PC-9 (cell line): ENCODE measurements at regions of chr13 and their contacts with region 1.

Region 1: GRCh38 chr13:41411522-41411921 is 45.8 kb upstream of the RGCC start:
- DNase-seq: peak in 1 of 2 experiments; percentile 25
- H3K4me3 ChIP-seq: no peak overlapping the region
- H3K27ac ChIP-seq: no peak overlapping the region
- H3K4me1 ChIP-seq: no peaks in the 10 kb centered on the region
- H3K27me3 ChIP-seq: no peaks in the 10 kb centered on the region
- CTCF ChIP-seq: peak; percentile 41; the same call in 1 of the 2 replicates

Region 2: GRCh38 chr13:41352935-41353840 is 58.3 kb before region 1 on chr13:
- CTCF ChIA-PET with region 1: no interaction called
- POLR2A ChIA-PET with region 1: interaction called, 6 read pairs
- intact Hi-C with region 1: loop called (anchors 2 kb)
- DNase-seq: peak; percentile 38 to 53
- H3K4me3 ChIP-seq: no peak overlapping the region
- H3K27ac ChIP-seq: 0 out of 2 replicates have a peak overlapping the region, but pooled peaks have one; percentile 32
- H3K4me1 ChIP-seq: peaks cover 16% of the 10 kb centered on the region
- H3K27me3 ChIP-seq: no peaks in the 10 kb centered on the region
- CTCF ChIP-seq: peak; percentile 84